Esophagus muscularis mucosa (tissue), 4 donors: ENCODE measurements at regions of chr19 and their contacts with region 1.

Region 1: GRCh38 chr19:56076498-56076897 is 44.6 kb downstream of the ZNF787 start:
- DNase-seq: no peak
- H3K4me3 ChIP-seq: no peak overlapping the region
- H3K27ac ChIP-seq: no peak overlapping the region
- H3K4me1 ChIP-seq: peaks cover 9 to 11% (median 11%) of the 10 kb centered on the region in 4 donors
- H3K27me3 ChIP-seq: no peaks in the 10 kb centered on the region
- CTCF ChIP-seq: peak; percentile 85 to 92 (median 85)
- EP300 ChIP-seq: no peak
- POLR2A ChIP-seq: no peak

Region 2: GRCh38 chr19:56252699-56253422 is 176.4 kb after region 1 on chr19:
- intact Hi-C with region 1: loop called (anchors 5 kb)
- DNase-seq: peak; percentile 92
- H3K4me3 ChIP-seq: no peak overlapping the region
- H3K27ac ChIP-seq: no peak overlapping the region
- H3K4me1 ChIP-seq: peaks cover 0 to 4% (median 0%) of the 10 kb centered on the region in 4 donors
- H3K27me3 ChIP-seq: peaks cover 0 to 18% (median under 1%) of the 10 kb centered on the region in 4 donors
- CTCF ChIP-seq: peak; percentile 68 to 94 (median 73)
- EP300 ChIP-seq: no peak
- POLR2A ChIP-seq: no peak

Region 3: DNA sequence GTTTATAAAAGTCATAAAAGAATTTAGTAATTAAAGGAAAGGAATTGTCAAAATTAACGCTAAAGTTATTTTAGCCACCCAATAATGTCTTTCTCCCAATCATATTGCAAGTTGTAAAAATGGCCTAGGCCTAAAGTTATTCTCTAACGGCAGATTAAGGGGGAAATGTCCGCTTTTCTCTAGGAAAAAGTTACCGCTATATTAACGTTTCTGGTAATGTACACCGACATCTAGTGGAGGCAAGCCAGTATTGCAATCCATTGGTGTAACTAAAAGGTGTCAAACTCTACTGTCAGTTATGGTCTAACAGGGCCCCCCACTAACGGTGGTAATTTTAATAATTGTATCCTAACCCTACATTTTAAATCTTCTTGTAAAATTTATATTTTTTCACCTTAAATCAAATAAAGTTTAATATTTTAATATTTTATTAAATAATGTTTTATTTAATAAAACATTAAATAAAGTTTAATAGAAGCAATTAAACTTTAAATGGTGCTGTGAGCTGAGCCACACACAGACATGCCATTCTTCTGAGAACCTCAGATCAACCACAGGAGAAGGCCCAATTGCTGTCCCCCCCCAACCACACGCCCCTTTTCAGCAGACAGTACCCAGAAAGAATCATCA is 274.0 kb after region 1 on chr19:
- intact Hi-C with region 1: loop called (anchors 5 kb)
- DNase-seq: no peak
- H3K4me3 ChIP-seq: no peak overlapping the region
- H3K27ac ChIP-seq: no peak overlapping the region
- H3K4me1 ChIP-seq: no peaks in the 10 kb centered on the region
- H3K27me3 ChIP-seq: no peaks in the 10 kb centered on the region
- CTCF ChIP-seq: peak; percentile 83 to 89 (median 88)
- EP300 ChIP-seq: no peak
- POLR2A ChIP-seq: no peak